ENCODE measurements at regions of chr6 and their contacts with region 1.

Region 1: DNA sequence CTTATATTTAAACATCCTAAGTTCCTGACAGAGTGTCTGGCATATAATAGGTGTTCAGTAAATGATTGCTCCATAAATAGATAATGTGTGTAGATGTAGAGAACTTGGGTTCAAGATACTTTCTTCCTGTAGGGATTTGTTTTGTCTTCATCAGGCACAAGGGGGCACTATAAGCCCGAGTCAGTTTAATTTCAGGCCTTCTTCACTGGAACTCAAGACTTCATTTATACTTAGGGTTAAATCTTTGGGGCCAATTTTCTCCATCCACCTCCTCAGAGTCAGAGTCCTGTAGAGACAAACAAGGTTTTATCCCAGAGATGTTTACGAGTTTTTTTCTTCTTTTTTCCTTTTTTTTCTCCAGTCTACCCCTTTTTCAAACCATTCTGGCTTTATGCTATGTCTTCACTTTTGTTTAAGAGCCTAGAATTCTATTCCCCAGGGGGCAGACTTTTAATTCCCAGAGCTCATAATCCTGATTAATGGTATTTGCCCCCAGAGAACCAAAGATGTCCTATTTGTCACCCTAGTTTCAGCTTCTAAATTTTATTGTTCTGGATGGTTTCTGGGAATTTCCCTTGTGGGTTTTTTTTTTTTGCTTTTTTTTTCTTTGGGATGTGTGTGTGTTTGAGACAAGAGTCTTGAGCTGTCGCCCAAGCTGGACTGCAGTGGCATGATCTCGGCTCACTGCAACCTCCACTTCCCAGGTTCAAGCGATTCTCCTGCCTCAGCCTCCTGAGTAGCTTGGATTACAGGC is 88.4 kb downstream of the HFE start:
- DNase-seq: peak; percentile 57 to 72 (median 71)
- H3K4me3 ChIP-seq: no peak overlapping the region
- H3K4me3 Mint-ChIP-seq: no peak overlapping the region
- H3K27ac ChIP-seq: no peak overlapping the region
- H3K27ac Mint-ChIP-seq: peak overlapping the region in 1 of 7 donors; percentile 66
- H3K4me1 ChIP-seq: peaks cover 19 to 20% of the 10 kb centered on the region in 2 donors
- H3K4me1 Mint-ChIP-seq: peaks cover 22% of the 10 kb centered on the region
- H3K27me3 ChIP-seq: no peaks in the 10 kb centered on the region
- H3K27me3 Mint-ChIP-seq: peaks cover 0 to 1% (median 0%) of the 10 kb centered on the region in 3 donors
- CTCF ChIP-seq: peak; percentile 86

Region 2: GRCh38 chr6:26156076-26156849 is 19.3 kb before region 1 on chr6:
- intact Hi-C with region 1: loop called in 1 of 2 experiments (anchors 2 kb)
- DNase-seq: peak; percentile 82 to 89 (median 87)
- H3K4me3 ChIP-seq: peak overlapping the region; percentile 58 to 88 (median 70)
- H3K4me3 Mint-ChIP-seq: peak overlapping the region; percentile 92 to 93
- H3K27ac ChIP-seq: peak overlapping the region; percentile 87 to 88
- H3K27ac Mint-ChIP-seq: peak overlapping the region; percentile 92 to 100 (median 98)
- H3K4me1 ChIP-seq: peaks cover 38 to 40% of the 10 kb centered on the region in 2 donors
- H3K4me1 Mint-ChIP-seq: peaks cover 36% of the 10 kb centered on the region
- H3K27me3 ChIP-seq: no peaks in the 10 kb centered on the region
- H3K27me3 Mint-ChIP-seq: no peaks in the 10 kb centered on the region
- CTCF ChIP-seq: no peak

Measured in CD14-positive monocyte (primary cell).